Endothelial cell of umbilical vein (primary cell): ENCODE measurements at regions of chr11 and their contacts with region 1.

Region 1: DNA sequence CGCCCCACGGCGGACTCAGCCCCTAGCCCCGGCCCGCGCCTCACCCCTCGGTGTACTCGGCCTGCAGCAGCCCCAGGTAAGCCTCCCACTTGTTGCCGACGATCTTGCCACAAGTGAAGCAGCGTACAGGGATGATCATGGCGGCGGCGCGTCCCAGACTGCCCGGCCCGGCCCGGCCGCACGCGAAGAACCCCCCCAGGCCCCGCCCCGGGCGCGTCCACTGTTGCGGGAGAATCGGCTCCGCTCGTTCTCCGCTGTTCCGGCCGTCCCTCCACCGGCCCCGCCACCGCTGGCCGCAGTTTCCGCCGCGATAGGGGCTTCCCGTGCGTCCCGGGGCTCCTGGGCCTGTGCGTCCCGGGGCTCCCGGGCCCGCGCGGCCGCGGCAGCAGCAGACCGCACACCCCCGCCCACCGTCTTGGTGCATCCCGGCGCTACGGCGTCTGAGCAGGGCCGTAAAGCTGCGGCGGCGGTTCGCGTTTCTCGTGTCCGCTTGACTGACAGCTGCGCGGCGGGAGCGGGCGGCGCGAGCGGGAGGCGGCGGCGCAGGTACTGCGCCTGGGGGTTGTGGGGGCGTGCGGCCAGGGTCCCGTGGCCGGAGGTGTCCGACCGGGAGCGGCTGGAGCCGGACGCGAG is at the starts of genes POLR2L and TSPAN4:
- DNase-seq: peak; percentile 85
- H3K4me3 ChIP-seq: peak within 1 kb of the TSS; percentile 84 to 95 (median 94)
- H3K27ac ChIP-seq: peak within 1 kb of the TSS; percentile 95
- H3K4me1 ChIP-seq: peaks cover 38% of the 10 kb centered on the region
- H3K27me3 ChIP-seq: no peaks in the 10 kb centered on the region
- CTCF ChIP-seq: no peak
- POLR2A ChIP-seq: peak; percentile 99
- total RNA-seq, gene POLR2L: 252 and 259 TPM in 2 replicates
- total RNA-seq, gene TSPAN4: 86.5 and 114 TPM in 2 replicates

Region 2: DNA sequence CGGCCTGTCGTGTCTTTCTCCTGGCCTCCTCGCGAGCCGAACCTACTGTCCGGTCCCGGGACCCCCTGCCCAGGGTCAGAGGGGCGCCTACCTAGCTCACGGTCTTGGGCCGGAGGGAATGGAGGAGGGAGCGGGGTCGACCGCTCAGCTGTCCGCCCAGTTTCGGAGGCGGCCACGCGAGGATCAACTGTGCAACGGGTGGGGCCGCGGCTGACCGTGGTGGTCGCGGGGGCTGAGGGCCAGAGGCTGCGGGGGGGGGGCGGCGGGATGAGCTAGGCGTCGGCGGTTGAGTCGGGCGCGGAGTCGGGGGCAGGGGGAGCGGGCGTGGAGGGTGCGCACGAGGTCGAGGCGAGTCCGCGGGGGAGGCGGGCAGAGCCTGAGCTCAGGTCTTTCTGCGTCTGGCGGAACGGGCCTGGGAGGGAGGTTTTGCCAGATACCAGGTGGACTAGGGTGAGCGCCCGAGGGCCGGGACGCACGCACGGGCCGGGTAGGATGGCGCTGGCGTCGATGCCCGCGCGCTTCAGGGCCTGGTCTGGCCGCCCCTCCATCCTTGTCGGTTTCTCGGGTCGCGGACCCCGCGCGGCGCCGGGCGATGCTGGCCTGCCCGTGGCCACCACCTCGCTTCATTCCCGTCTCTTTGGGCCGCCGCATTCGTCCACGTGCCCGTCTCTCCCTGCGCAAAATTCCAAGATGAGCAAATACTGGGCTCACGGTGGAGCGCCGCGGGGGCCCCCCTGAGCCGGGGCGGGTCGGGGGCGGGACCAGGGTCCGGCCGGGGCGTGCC is 205.8 kb before region 1 on chr11:
- CTCF ChIA-PET with region 1: no interaction called
- POLR2A ChIA-PET with region 1: no interaction called
- dilution Hi-C with region 1: no loop called
- intact Hi-C with region 1: no loop called
- DNase-seq: no peak
- H3K4me3 ChIP-seq: no peak overlapping the region
- H3K27ac ChIP-seq: no peak overlapping the region
- H3K4me1 ChIP-seq: peaks cover 4% of the 10 kb centered on the region
- H3K27me3 ChIP-seq: peaks cover 27 to 45% of the 10 kb centered on the region in 2 experiments
- CTCF ChIP-seq: no peak
- POLR2A ChIP-seq: no peak

Region 3: GRCh38 chr11:809287-810039 is 33.0 kb before region 1 on chr11 and contains the start of gene RPLP2:
- CTCF ChIA-PET with region 1: interaction called, 3 read pairs
- POLR2A ChIA-PET with region 1: interaction called, 5 read pairs
- dilution Hi-C with region 1: no loop called
- intact Hi-C with region 1: loop called (anchors 1 kb)
- DNase-seq: peak; percentile 96
- H3K4me3 ChIP-seq: peak within 1 kb of the TSS; percentile 77 to 90 (median 80)
- H3K27ac ChIP-seq: peak within 1 kb of the TSS; percentile 97
- H3K4me1 ChIP-seq: peaks cover 26% of the 10 kb centered on the region
- H3K27me3 ChIP-seq: no peaks in the 10 kb centered on the region
- CTCF ChIP-seq: no peak
- POLR2A ChIP-seq: peak; percentile 92
- total RNA-seq, gene RPLP2: 1,644 and 1,739 TPM in 2 replicates

Region 4: GRCh38 chr11:819129-819931 is 23.2 kb before region 1 on chr11:
- CTCF ChIA-PET with region 1: interaction called, 4 read pairs
- POLR2A ChIA-PET with region 1: interaction called, 14 read pairs
- dilution Hi-C with region 1: no loop called
- intact Hi-C with region 1: no loop called
- DNase-seq: peak; percentile 85
- H3K4me3 ChIP-seq: peak overlapping the region; percentile 66 to 79 (median 77)
- H3K27ac ChIP-seq: peak overlapping the region; percentile 89
- H3K4me1 ChIP-seq: peaks cover 20% of the 10 kb centered on the region
- H3K27me3 ChIP-seq: no peaks in the 10 kb centered on the region
- CTCF ChIP-seq: peak in 1 of 2 donors; percentile 14
- POLR2A ChIP-seq: peak; percentile 98

Region 5: GRCh38 chr11:910589-911195 is 68.2 kb after region 1 on chr11 and contains the start of gene CHID1:
- CTCF ChIA-PET with region 1: no interaction called
- POLR2A ChIA-PET with region 1: no interaction called
- dilution Hi-C with region 1: no loop called
- intact Hi-C with region 1: loop called (anchors 2 kb)
- DNase-seq: peak; percentile 81
- H3K4me3 ChIP-seq: peak within 1 kb of the TSS; percentile 74 to 96 (median 81)
- H3K27ac ChIP-seq: peak within 1 kb of the TSS; percentile 53
- H3K4me1 ChIP-seq: peaks cover 8% of the 10 kb centered on the region
- H3K27me3 ChIP-seq: no peaks in the 10 kb centered on the region
- CTCF ChIP-seq: no peak
- POLR2A ChIP-seq: peak; percentile 84
- total RNA-seq, gene CHID1: 86.2 and 89.8 TPM in 2 replicates